ENCODE measurements at regions of chr2 and their contacts with region 1.

Region 1: GRCh38 chr2:230902180-230902899 is 22.7 kb downstream of the GPR55 start:
- DNase-seq: peak; percentile 50
- H3K4me3 Mint-ChIP-seq: no peak overlapping the region
- H3K27ac Mint-ChIP-seq: no peak overlapping the region
- H3K4me1 Mint-ChIP-seq: no peaks in the 10 kb centered on the region
- H3K27me3 Mint-ChIP-seq: peaks cover 93% of the 10 kb centered on the region
- CTCF ChIP-seq: peak; percentile 78

Region 2: GRCh38 chr2:230824406-230824978 is 77.8 kb before region 1 on chr2:
- CTCF ChIA-PET with region 1: interaction called, 4 read pairs
- intact Hi-C with region 1: loop called (anchors 5 kb)
- DNase-seq: peak; percentile 66
- H3K4me3 Mint-ChIP-seq: peak overlapping the region; percentile 32
- H3K27ac Mint-ChIP-seq: no peak overlapping the region
- H3K4me1 Mint-ChIP-seq: peaks cover 8% of the 10 kb centered on the region
- H3K27me3 Mint-ChIP-seq: peaks cover 51% of the 10 kb centered on the region
- CTCF ChIP-seq: peak; percentile 75

Region 3: GRCh38 chr2:230885463-230886130 is 16.7 kb before region 1 on chr2:
- CTCF ChIA-PET with region 1: no interaction called
- intact Hi-C with region 1: no loop called
- DNase-seq: no peak
- H3K4me3 Mint-ChIP-seq: no peak overlapping the region
- H3K27ac Mint-ChIP-seq: no peak overlapping the region
- H3K4me1 Mint-ChIP-seq: no peaks in the 10 kb centered on the region
- H3K27me3 Mint-ChIP-seq: peaks cover 30% of the 10 kb centered on the region
- CTCF ChIP-seq: no peak

Measured in Calu3 (cell line).